Naive thymus-derived CD4-positive, alpha-beta T cell (primary cell): ENCODE measurements at regions of chr4 and their contacts with region 1.

Region 1: GRCh38 chr4:142098900-142099545 is 462.6 kb downstream of the IL15 start:
- DNase-seq: no peak
- ATAC-seq: no peak
- H3K4me3 ChIP-seq: no peak overlapping the region
- H3K4me3 Mint-ChIP-seq: no peak overlapping the region
- H3K27ac ChIP-seq: no peak overlapping the region
- H3K27ac Mint-ChIP-seq: peak overlapping the region in 4 of 9 donors; percentile 4 to 52 (median 26)
- H3K4me1 ChIP-seq: no peaks in the 10 kb centered on the region
- H3K4me1 Mint-ChIP-seq: peaks cover 0 to 33% (median 10%) of the 10 kb centered on the region in 7 donors
- H3K27me3 ChIP-seq: no peaks in the 10 kb centered on the region
- H3K27me3 Mint-ChIP-seq: no peaks in the 10 kb centered on the region

Region 2: DNA sequence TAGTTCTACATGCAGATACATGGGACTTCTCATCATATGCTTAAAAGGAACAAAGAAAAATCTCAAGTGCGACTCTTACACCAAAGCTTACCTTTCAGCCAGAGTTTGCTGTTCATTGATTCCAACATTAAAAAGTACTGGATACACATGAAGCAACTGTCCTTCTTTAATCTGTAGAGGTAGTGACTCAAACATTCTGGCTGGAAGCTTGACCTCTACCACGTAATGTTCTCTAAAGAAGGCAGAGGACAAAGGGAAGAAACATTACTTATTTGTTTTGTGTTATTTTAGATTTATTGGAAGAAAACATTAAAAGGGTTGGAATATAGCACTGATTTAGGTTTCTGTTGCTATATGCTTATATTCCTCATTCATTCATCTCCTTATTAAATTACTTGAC is 13.4 kb after region 1 on chr4:
- CTCF ChIA-PET with region 1: no interaction called
- POLR2A ChIA-PET with region 1: interaction called, 3 read pairs
- intact Hi-C with region 1: loop called in 1 of 2 experiments (anchors 1 kb)
- DNase-seq: no peak
- ATAC-seq: no peak
- H3K4me3 ChIP-seq: no peak overlapping the region
- H3K4me3 Mint-ChIP-seq: no peak overlapping the region
- H3K27ac ChIP-seq: no peak overlapping the region
- H3K27ac Mint-ChIP-seq: no peak overlapping the region
- H3K4me1 ChIP-seq: no peaks in the 10 kb centered on the region
- H3K4me1 Mint-ChIP-seq: peaks cover 2 to 25% (median 20%) of the 10 kb centered on the region in 7 donors
- H3K27me3 ChIP-seq: no peaks in the 10 kb centered on the region
- H3K27me3 Mint-ChIP-seq: no peaks in the 10 kb centered on the region